PC-9 (cell line): ENCODE measurements at regions of chr12 and their contacts with region 1.

Region 1: GRCh38 chr12:85076688-85077430 is 40.7 kb downstream of the LRRIQ1 start:
- DNase-seq: peak; percentile 41 to 85
- H3K4me3 ChIP-seq: no peak overlapping the region
- H3K27ac ChIP-seq: no peak overlapping the region
- H3K4me1 ChIP-seq: no peaks in the 10 kb centered on the region
- H3K27me3 ChIP-seq: no peaks in the 10 kb centered on the region
- CTCF ChIP-seq: peak; percentile 64

Region 2: GRCh38 chr12:85057370-85057963 is 19.4 kb before region 1 on chr12:
- CTCF ChIA-PET with region 1: no interaction called
- POLR2A ChIA-PET with region 1: no interaction called
- intact Hi-C with region 1: no loop called
- DNase-seq: peak in 1 of 2 experiments; percentile 10
- H3K4me3 ChIP-seq: no peak overlapping the region
- H3K27ac ChIP-seq: no peak overlapping the region
- H3K4me1 ChIP-seq: no peaks in the 10 kb centered on the region
- H3K27me3 ChIP-seq: no peaks in the 10 kb centered on the region
- CTCF ChIP-seq: peak; percentile 92

Region 3: DNA sequence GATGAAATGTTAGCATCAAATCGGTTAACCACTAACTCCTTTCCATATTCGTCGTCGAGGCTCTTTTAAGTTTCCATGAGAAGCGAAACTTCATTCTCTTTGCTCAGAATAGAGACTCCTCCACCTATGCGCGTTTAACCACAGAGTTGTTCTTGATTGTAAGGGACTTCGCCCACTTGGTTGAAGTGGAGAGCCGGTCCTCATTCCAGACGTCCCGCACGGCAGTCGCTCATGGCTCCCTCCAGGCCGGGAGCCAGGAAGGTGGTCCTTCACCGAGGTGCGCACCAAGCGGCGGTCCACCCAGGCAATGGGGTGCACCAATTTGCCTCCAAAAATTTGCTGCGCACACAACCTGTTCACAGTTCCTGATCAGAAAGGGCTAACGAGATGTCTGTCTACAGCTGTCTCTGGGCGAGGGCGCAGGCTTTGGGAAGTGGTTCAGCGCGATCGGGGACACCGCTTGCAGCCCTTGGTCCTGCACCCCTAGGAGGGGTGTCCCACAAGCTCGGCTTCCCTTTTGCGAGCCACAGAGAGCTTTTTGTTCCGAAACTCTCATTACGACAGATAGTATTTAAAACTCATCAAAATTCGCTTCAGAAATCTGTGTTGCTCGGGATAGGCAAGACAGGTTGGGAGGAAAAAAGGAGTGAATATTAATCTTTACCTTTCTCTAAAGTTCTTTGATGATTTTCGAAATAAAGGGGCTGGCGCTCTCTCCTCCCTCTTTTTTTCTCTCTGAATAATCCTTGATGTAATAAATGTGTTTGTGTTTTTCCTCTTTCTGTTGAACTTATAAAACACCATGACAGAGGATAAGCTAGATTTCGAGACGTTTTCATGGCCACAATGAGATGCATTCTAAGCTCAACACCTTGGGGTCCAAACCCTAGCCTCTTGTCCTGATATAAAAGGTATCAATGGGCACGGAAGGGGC is 196.8 kb after region 1 on chr12:
- CTCF ChIA-PET with region 1: interaction called, 13 read pairs
- POLR2A ChIA-PET with region 1: no interaction called
- intact Hi-C with region 1: no loop called
- DNase-seq: no peak
- H3K4me3 ChIP-seq: no peak overlapping the region
- H3K27ac ChIP-seq: no peak overlapping the region
- H3K4me1 ChIP-seq: no peaks in the 10 kb centered on the region
- H3K27me3 ChIP-seq: no peaks in the 10 kb centered on the region
- CTCF ChIP-seq: no peak

Region 4: DNA sequence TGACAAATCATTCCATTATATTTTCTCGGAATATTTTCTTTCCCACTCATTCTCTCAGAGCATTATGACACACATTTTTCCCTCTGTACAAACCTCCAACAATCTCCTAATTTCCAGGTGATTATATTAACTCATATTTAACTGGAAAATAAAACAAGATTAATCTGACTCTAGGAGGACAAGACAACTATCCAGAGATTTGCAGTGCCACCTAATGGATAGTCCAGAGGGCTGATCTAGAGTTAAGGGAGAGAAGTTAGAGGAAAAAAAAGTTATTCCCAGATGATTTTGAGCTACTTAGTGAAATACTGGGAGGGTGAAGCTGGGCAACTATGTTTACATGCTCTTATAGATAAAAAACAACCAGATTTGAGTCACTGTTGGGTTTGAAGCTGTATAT is 364.9 kb after region 1 on chr12:
- CTCF ChIA-PET with region 1: no interaction called
- POLR2A ChIA-PET with region 1: no interaction called
- intact Hi-C with region 1: loop called (anchors 2 kb)
- DNase-seq: no peak
- H3K4me3 ChIP-seq: no peak overlapping the region
- H3K27ac ChIP-seq: no peak overlapping the region
- H3K4me1 ChIP-seq: no peaks in the 10 kb centered on the region
- H3K27me3 ChIP-seq: no peaks in the 10 kb centered on the region
- CTCF ChIP-seq: peak; percentile 43; the same call in 1 of the 2 replicates

Region 5: DNA sequence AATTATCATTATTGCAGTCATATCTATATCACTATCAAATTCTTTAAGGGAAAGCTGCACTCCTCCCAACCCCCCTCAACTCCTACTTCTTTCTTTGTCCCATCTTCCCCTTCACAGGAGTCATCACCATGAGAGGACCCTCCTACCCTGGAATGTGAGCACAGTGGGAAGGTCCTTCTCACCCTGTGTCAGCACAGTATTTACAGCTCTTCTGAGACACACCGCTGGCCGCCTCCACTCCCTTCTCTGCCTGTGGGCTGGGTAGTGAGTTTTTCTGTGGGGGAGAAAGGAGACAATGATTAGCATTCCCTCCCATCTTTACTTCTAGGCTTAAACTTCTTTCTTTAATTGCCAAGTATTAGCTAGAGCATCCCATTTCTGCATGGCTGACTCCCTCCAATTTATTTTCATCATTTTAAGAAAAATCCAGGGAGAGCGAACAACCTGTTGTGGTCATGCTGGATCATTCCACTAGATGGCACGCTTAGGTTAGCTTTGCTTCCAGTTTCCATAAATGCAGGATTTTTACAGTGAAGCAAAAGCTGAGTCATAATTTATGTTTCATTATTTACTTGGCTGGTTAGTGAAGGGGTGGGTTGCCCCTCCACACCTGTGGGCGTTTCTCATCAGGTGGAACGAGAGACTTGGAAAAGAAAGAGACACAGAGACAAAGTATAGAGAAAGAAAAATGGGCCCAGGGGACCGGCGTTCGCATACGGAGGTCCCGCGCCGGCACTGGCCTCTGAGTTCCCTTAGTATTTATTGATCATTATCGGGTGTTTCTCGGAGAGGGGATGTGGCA is 391.7 kb after region 1 on chr12:
- CTCF ChIA-PET with region 1: interaction called, 6 read pairs
- POLR2A ChIA-PET with region 1: no interaction called
- intact Hi-C with region 1: loop called (anchors 5 kb)
- DNase-seq: peak; percentile 52 to 68
- H3K4me3 ChIP-seq: peak overlapping the region; percentile 43; the same call in 1 of the 2 replicates
- H3K27ac ChIP-seq: 0 out of 2 replicates have a peak overlapping the region, but pooled peaks have one; percentile 1
- H3K4me1 ChIP-seq: peaks cover 27% of the 10 kb centered on the region
- H3K27me3 ChIP-seq: no peaks in the 10 kb centered on the region
- CTCF ChIP-seq: peak; percentile 87

Region 6: GRCh38 chr12:85920324-85920947 is 843.6 kb after region 1 on chr12:
- CTCF ChIA-PET with region 1: no interaction called
- POLR2A ChIA-PET with region 1: no interaction called
- intact Hi-C with region 1: loop called (anchors 5 kb)
- DNase-seq: no peak
- H3K4me3 ChIP-seq: no peak overlapping the region
- H3K27ac ChIP-seq: no peak overlapping the region
- H3K4me1 ChIP-seq: no peaks in the 10 kb centered on the region
- H3K27me3 ChIP-seq: no peaks in the 10 kb centered on the region
- CTCF ChIP-seq: peak; percentile 77